ENCODE measurements at regions of chr2 and their contacts with region 1.

Region 1: DNA sequence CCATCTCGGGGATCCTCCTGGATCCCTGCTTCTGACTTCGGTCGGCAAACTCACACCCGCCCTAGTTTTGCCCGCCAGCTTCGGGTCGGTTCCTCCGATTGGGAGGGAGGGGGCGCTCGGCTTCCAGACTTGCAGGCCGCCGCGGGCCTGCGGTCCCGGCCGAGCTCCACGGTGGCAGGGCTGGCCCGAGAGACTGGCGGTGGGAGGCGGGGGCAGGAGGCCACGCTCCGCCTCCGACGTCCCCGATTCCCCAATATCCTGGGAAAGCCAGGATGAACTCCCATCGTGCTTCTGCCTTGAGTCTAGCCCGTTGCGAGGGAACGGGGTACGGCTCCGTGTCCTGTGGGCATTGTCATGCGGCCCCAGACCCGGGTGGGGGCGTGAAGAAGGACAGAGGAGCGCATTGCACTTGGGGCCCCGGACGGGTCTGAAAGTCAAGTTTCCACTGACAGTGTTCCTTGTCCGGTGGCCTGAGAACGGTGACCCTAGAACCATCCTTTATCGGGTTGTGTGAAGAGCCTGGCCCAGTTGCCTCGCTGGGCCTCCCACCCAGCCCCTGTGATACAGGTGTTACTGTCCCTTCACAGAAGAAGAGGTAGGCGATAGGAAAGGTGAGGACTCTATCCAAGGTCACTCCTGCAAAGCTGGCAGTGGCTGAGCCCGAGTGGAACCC is 2.4 kb upstream of the INHBB start:
- DNase-seq: peak; percentile 59
- ATAC-seq: peak; percentile 88
- H3K4me3 ChIP-seq: 0 out of 4 replicates have a peak overlapping the region, but pooled peaks of 1 of the 2 experiments have one; percentile 23
- H3K27ac ChIP-seq: no peak overlapping the region
- H3K4me1 ChIP-seq: peaks cover 0 to 23% of the 10 kb centered on the region in 2 experiments; a peak in 2 of 4 replicates
- H3K27me3 ChIP-seq: no peaks in the 10 kb centered on the region
- CTCF ChIP-seq: peak; percentile 77 to 95 (median 81)
- POLR2A ChIP-seq: no peak
- RAD21 ChIP-seq: peak; percentile 98

Region 2: DNA sequence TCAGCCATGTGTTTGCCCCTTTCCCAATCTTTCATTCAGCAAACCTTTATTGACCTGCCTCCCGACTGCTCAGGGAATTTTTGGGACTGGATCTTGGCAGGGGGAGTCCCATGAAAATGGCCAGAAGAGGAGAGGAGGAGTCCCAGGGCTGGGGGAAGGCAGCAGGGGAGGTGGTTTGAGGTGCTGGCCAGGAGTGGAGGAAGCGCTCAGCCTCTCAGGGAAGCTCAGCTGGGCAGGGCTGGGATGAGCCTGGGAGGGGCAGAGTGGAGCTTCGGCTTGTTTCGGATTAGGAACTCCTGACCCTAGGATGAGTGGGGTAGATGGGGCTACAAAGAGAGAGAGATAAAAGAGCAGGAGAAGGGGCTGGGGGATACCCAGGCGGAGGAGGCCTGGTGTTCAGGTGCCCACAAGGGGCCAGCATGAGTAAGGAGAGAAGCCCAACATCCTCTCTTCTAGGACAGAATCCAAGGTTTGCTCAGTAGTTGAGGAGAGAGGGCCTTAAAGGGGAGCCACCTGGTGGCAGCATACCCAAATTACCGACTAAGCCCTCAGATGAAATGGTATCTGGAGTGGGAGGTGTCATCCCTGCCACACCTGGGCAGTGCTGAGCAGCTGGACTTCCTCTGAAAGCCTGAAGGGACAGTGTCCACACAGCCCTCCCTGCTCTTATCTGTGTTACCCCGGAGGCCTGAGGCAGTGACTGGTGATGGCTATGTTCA is 93.5 kb after region 1 on chr2:
- CTCF ChIA-PET with region 1: interaction called, 8 read pairs
- POLR2A ChIA-PET with region 1: interaction called, 3 read pairs
- RAD21 ChIA-PET with region 1: interaction called, 4 to 5 read pairs
- intact Hi-C with region 1: loop called (anchors 10 kb)
- DNase-seq: peak; percentile 50
- ATAC-seq: peak; percentile 86
- H3K4me3 ChIP-seq: no peak overlapping the region
- H3K27ac ChIP-seq: no peak overlapping the region
- H3K4me1 ChIP-seq: peaks cover 0 to 15% of the 10 kb centered on the region in 2 experiments; a peak in 2 of 4 replicates
- H3K27me3 ChIP-seq: no peaks in the 10 kb centered on the region
- CTCF ChIP-seq: peak; percentile 71 to 88 (median 72)
- POLR2A ChIP-seq: no peak
- RAD21 ChIP-seq: peak; percentile 68

Region 3: DNA sequence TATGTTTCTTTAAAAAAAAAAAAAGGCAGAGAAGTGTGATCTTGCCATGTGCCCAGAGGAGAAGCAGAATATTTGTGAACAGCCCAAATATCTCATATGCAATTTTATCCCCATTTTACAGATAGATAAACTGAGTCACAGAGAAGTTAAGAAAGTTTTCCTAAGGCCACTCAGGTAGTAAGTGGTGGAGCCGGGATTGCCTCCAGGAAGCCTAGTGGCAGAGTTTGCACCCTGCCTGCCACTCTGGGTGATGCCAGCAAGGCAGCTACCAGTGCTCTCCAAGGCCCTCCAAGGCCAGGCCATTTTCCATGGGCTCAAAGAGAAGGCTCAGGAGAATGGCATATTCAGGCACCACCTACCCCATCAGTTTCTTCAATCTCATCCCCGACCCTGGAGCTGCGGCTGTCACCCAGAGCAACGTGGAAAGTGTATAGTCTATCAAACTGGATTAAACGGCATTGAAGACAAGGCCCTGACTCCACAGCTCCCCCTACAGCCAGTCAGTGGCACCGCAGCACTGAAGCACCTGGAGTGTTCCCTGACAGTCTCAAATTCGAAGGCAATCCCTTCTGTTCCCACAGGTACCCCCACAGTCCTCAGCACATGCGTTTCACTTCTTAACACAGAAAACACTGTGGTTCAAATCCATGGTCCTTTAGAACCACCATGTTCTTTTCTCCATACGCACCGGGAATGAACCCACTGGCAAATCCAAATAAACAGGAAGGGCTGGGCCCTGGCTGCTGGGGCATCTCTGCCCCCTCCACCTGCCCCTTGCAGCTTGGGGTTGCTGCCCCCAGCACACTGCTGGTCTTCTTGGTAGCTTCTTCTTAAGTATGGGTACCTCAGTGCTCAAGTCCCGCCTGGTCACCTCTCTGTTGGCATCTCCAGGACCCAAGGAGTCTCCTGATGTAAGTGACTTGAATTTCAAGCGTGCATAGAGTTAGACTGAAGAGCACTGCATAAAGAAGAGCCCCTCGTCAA is 177.7 kb after region 1 on chr2:
- CTCF ChIA-PET with region 1: interaction called, 5 read pairs
- POLR2A ChIA-PET with region 1: no interaction called
- RAD21 ChIA-PET with region 1: interaction called in 1 of 2 experiments, 3 read pairs
- intact Hi-C with region 1: loop called (anchors 10 kb)
- DNase-seq: peak; percentile 47
- ATAC-seq: peak; percentile 92
- H3K4me3 ChIP-seq: no peak overlapping the region
- H3K27ac ChIP-seq: no peak overlapping the region
- H3K4me1 ChIP-seq: peaks cover 4 to 7% of the 10 kb centered on the region in 2 experiments; a peak in 3 of 4 replicates
- H3K27me3 ChIP-seq: no peaks in the 10 kb centered on the region
- CTCF ChIP-seq: peak; percentile 56 to 99 (median 95); a peak in 5 of 6 replicates
- POLR2A ChIP-seq: no peak
- RAD21 ChIP-seq: peak; percentile 61

Region 4: GRCh38 chr2:120552800-120553481 is 209.4 kb after region 1 on chr2:
- CTCF ChIA-PET with region 1: interaction called, 25 read pairs
- POLR2A ChIA-PET with region 1: interaction called, 6 read pairs
- RAD21 ChIA-PET with region 1: interaction called in 1 of 2 experiments, 9 read pairs
- intact Hi-C with region 1: loop called (anchors 1 kb)
- DNase-seq: peak; percentile 84
- ATAC-seq: peak; percentile 100
- H3K4me3 ChIP-seq: peak overlapping the region; percentile 37 to 48
- H3K27ac ChIP-seq: no peak overlapping the region
- H3K4me1 ChIP-seq: peaks cover 4 to 16% of the 10 kb centered on the region in 2 experiments; a peak in 3 of 4 replicates
- H3K27me3 ChIP-seq: no peaks in the 10 kb centered on the region
- CTCF ChIP-seq: peak; percentile 66 to 85 (median 72); a peak in 5 of 6 replicates
- POLR2A ChIP-seq: no peak
- RAD21 ChIP-seq: peak; percentile 68

Region 5: GRCh38 chr2:120703330-120703994 is 359.9 kb after region 1 on chr2:
- CTCF ChIA-PET with region 1: no interaction called
- POLR2A ChIA-PET with region 1: no interaction called
- RAD21 ChIA-PET with region 1: no interaction called
- intact Hi-C with region 1: no loop called
- DNase-seq: peak; percentile 59
- ATAC-seq: peak; percentile 87
- H3K4me3 ChIP-seq: no peak overlapping the region
- H3K27ac ChIP-seq: no peak overlapping the region
- H3K4me1 ChIP-seq: peaks cover 16 to 40% of the 10 kb centered on the region in 2 experiments; a peak in 3 of 4 replicates
- H3K27me3 ChIP-seq: no peaks in the 10 kb centered on the region
- CTCF ChIP-seq: no peak
- POLR2A ChIP-seq: no peak
- RAD21 ChIP-seq: no peak

Region 6: GRCh38 chr2:120949027-120949956 is 605.7 kb after region 1 on chr2:
- CTCF ChIA-PET with region 1: no interaction called
- POLR2A ChIA-PET with region 1: no interaction called
- RAD21 ChIA-PET with region 1: no interaction called
- intact Hi-C with region 1: no loop called
- DNase-seq: no peak
- ATAC-seq: peak; percentile 87
- H3K4me3 ChIP-seq: no peak overlapping the region
- H3K27ac ChIP-seq: no peak overlapping the region
- H3K4me1 ChIP-seq: no peaks in the 10 kb centered on the region
- H3K27me3 ChIP-seq: no peaks in the 10 kb centered on the region
- CTCF ChIP-seq: peak; percentile 52 to 67 (median 63); a peak in 5 of 6 replicates
- POLR2A ChIP-seq: no peak
- RAD21 ChIP-seq: peak; percentile 67

Measured in HCT116 (cell line).